CD8-positive, alpha-beta T cell (primary cell): ENCODE measurements at regions of chr10 and their contacts with region 1.

Region 1: GRCh38 chr10:3948843-3949242 is 163.8 kb upstream of the KLF6 start:
- DNase-seq: peak; percentile 55 to 93 (median 83)
- ATAC-seq: peak; percentile 82
- H3K4me3 ChIP-seq: no peak overlapping the region
- H3K4me3 Mint-ChIP-seq: peak overlapping the region; percentile 49
- H3K27ac ChIP-seq: peak overlapping the region in 1 of 2 experiments; percentile 72
- H3K27ac Mint-ChIP-seq: peak overlapping the region; percentile 86
- H3K4me1 ChIP-seq: peaks cover 52% of the 10 kb centered on the region
- H3K4me1 Mint-ChIP-seq: peaks cover 55% of the 10 kb centered on the region
- H3K27me3 ChIP-seq: no peaks in the 10 kb centered on the region
- H3K27me3 Mint-ChIP-seq: no peaks in the 10 kb centered on the region
- CTCF ChIP-seq: no peak

Region 2: DNA sequence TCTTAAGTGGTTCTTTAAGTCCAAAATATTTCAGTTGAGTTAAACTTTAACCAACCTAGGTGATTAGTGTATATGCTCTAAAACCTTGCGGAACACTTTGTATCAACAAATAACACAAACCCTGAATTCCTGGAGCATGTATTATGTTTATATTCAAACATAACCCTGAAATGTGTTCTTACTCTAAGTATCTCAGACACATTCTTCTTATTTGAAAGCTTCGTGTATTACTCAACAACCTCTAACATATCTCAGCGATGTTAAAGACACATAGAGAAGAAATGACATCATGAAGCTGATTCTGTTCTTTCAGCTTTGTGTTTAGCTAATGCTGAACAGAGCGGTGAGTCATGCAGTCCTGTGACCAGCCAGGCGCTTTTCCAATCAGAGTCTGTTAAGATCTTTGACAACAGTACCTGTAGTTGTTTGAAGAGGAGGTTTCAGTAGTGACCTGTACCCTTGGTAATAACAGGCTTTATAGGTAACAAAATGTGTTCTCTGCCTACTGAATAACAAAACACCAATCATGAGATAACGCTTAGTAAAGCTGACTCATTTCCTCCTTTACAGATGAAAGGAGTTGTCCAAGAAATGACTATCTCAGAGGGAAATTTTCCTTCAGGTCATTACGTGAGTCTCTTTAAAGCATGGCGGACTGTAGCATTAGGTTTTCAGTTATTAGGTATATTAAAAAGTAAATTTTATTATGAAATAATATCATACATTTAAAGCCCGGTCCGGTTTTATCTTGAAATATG is 96.5 kb before region 1 on chr10:
- CTCF ChIA-PET with region 1: no interaction called
- POLR2A ChIA-PET with region 1: no interaction called
- intact Hi-C with region 1: loop called in 1 of 2 experiments (anchors 5 kb)
- DNase-seq: peak in 7 of 9 experiments; percentile 21 to 85 (median 56)
- ATAC-seq: peak; percentile 86
- H3K4me3 ChIP-seq: no peak overlapping the region
- H3K4me3 Mint-ChIP-seq: no peak overlapping the region
- H3K27ac ChIP-seq: peak overlapping the region in 1 of 2 experiments; percentile 60
- H3K27ac Mint-ChIP-seq: peak overlapping the region; percentile 80
- H3K4me1 ChIP-seq: no peaks in the 10 kb centered on the region
- H3K4me1 Mint-ChIP-seq: peaks cover 18% of the 10 kb centered on the region
- H3K27me3 ChIP-seq: no peaks in the 10 kb centered on the region
- H3K27me3 Mint-ChIP-seq: no peaks in the 10 kb centered on the region
- CTCF ChIP-seq: no peak

Region 3: DNA sequence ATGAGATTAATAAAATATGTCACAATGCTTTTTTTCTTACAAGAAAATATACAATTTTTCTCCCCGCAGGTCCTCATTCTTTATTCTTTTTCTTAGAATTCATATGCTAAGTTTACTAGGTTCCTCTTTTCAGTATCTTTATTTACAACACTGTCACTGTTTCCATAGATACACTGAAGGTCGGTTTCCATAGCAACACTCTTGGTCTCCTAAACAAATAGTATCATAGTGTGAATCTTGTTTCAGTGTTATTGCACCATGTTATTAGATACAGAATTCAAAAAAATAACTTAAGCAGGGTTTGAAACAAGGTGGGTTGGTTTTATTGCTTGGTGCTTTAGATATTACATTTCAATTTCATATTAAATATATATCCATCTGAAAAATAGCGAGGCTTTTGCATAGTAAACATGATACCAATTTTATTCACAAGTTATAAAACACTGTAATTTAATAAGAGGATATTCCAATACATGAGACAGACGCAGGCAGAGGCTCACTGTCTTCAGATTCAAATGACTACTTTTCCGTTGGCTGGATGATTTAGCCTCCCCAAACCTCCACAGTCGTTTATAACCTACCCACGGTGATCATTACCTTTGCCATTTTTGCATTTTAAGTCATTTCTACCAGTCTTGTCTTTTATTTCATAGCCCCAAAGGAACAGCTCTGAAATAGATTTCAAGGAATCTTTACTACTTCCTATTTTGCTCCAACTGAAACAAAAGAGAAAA is 74.9 kb before region 1 on chr10:
- CTCF ChIA-PET with region 1: no interaction called
- POLR2A ChIA-PET with region 1: no interaction called
- intact Hi-C with region 1: loop called (anchors 5 kb)
- DNase-seq: peak in 4 of 9 experiments; percentile 7 to 91 (median 50)
- ATAC-seq: peak; percentile 55
- H3K4me3 ChIP-seq: no peak overlapping the region
- H3K4me3 Mint-ChIP-seq: no peak overlapping the region
- H3K27ac ChIP-seq: peak overlapping the region; percentile 26 to 95
- H3K27ac Mint-ChIP-seq: peak overlapping the region; percentile 88
- H3K4me1 ChIP-seq: peaks cover 25% of the 10 kb centered on the region
- H3K4me1 Mint-ChIP-seq: peaks cover 43% of the 10 kb centered on the region
- H3K27me3 ChIP-seq: no peaks in the 10 kb centered on the region
- H3K27me3 Mint-ChIP-seq: no peaks in the 10 kb centered on the region
- CTCF ChIP-seq: no peak

Region 4: GRCh38 chr10:3961082-3961481 is 12.2 kb after region 1 on chr10:
- CTCF ChIA-PET with region 1: interaction called, 7 read pairs
- POLR2A ChIA-PET with region 1: interaction called, 5 read pairs
- intact Hi-C with region 1: loop called in 1 of 2 experiments (anchors 2 kb)
- DNase-seq: peak; percentile 34 to 89 (median 59)
- ATAC-seq: peak; percentile 98
- H3K4me3 ChIP-seq: no peak overlapping the region
- H3K4me3 Mint-ChIP-seq: peak overlapping the region; percentile 32
- H3K27ac ChIP-seq: peak overlapping the region in 1 of 2 experiments; percentile 5
- H3K27ac Mint-ChIP-seq: peak overlapping the region; percentile 76
- H3K4me1 ChIP-seq: peaks cover 24% of the 10 kb centered on the region
- H3K4me1 Mint-ChIP-seq: peaks cover 36% of the 10 kb centered on the region
- H3K27me3 ChIP-seq: no peaks in the 10 kb centered on the region
- H3K27me3 Mint-ChIP-seq: no peaks in the 10 kb centered on the region
- CTCF ChIP-seq: no peak

Region 5: DNA sequence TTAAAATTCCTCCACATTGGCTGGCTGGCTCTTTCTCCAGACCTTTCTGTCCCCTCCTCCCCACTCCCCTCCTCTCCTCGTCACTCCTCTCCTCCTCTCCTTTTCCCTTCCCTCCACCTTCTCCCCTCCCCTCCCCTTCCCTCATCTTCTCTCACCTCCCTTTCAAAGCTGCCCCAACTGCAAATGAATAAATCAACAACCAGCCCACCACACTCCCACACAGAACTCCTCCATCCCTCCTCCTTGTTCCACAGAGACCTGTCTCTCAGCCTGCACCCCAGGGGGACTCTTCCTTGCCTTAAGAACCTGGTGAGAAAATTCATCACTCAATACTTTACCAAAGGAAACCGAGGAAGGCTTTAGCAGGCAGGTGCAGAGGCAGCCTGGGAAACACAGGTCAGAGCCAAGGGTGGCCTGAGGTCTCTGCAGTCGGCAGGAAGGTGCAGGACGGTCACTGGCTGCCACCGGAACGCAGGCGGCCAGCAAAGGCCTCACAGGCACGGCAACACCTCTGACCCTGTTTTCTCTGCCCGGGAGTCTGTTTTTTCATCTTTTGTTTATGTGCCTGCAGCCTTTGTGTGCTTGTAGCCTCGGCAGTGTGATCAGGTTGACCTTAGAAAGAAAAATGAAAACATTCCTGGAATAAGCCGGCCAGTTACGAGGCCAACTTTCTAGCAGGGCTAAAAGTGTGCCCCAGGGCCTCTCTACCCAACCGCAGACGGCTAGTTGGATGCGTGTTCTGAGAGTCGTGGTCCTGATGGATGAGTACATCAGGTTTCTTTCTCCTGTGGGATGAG is 43.7 kb after region 1 on chr10:
- CTCF ChIA-PET with region 1: no interaction called
- POLR2A ChIA-PET with region 1: interaction called, 4 read pairs
- intact Hi-C with region 1: loop called in 1 of 2 experiments (anchors 5 kb)
- DNase-seq: no peak
- ATAC-seq: no peak
- H3K4me3 ChIP-seq: no peak overlapping the region
- H3K4me3 Mint-ChIP-seq: no peak overlapping the region
- H3K27ac ChIP-seq: no peak overlapping the region
- H3K27ac Mint-ChIP-seq: no peak overlapping the region
- H3K4me1 ChIP-seq: no peaks in the 10 kb centered on the region
- H3K4me1 Mint-ChIP-seq: no peaks in the 10 kb centered on the region
- H3K27me3 ChIP-seq: no peaks in the 10 kb centered on the region
- H3K27me3 Mint-ChIP-seq: no peaks in the 10 kb centered on the region
- CTCF ChIP-seq: no peak

Region 6: GRCh38 chr10:4151466-4151865 is 202.6 kb after region 1 on chr10:
- CTCF ChIA-PET with region 1: no interaction called
- POLR2A ChIA-PET with region 1: no interaction called
- intact Hi-C with region 1: no loop called
- DNase-seq: no peak
- ATAC-seq: no peak
- H3K4me3 ChIP-seq: no peak overlapping the region
- H3K4me3 Mint-ChIP-seq: no peak overlapping the region
- H3K27ac ChIP-seq: no peak overlapping the region
- H3K27ac Mint-ChIP-seq: no peak overlapping the region
- H3K4me1 ChIP-seq: peaks cover 7% of the 10 kb centered on the region
- H3K4me1 Mint-ChIP-seq: peaks cover 11% of the 10 kb centered on the region
- H3K27me3 ChIP-seq: no peaks in the 10 kb centered on the region
- H3K27me3 Mint-ChIP-seq: no peaks in the 10 kb centered on the region
- CTCF ChIP-seq: no peak